Caco-2 (cell line): ENCODE measurements at regions of chr9 and their contacts with region 1.

Region 1: DNA sequence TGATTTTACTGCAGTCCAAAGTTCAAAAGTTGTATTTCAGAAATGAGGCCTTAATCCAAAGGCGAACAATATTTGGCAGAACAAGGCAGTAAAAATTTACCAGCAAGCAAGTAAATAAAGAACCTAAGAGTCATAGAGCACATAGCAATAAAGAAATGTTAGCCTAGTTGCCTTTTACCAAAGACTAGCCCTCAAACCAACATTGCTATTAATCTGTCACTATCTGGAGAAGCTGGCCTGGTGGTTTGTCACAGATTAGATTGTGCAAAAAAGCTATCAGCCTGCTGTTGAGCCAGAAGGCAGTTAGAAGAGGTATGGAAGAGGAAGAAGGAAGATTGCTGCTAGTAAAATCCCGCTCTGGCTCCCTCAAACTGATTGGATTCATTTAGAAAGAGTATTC is 304.7 kb upstream of the KLF4 start:
- DNase-seq: peak; percentile 49 to 60
- H3K4me3 ChIP-seq: no peak overlapping the region
- H3K4me3 Mint-ChIP-seq: no peak overlapping the region
- H3K27ac Mint-ChIP-seq: no peak overlapping the region
- H3K4me1 ChIP-seq: peaks cover 40% of the 10 kb centered on the region
- H3K4me1 Mint-ChIP-seq: peaks cover 21% of the 10 kb centered on the region
- H3K27me3 ChIP-seq: no peaks in the 10 kb centered on the region
- H3K27me3 Mint-ChIP-seq: no peaks in the 10 kb centered on the region
- CTCF ChIP-seq: no peak

Region 2: DNA sequence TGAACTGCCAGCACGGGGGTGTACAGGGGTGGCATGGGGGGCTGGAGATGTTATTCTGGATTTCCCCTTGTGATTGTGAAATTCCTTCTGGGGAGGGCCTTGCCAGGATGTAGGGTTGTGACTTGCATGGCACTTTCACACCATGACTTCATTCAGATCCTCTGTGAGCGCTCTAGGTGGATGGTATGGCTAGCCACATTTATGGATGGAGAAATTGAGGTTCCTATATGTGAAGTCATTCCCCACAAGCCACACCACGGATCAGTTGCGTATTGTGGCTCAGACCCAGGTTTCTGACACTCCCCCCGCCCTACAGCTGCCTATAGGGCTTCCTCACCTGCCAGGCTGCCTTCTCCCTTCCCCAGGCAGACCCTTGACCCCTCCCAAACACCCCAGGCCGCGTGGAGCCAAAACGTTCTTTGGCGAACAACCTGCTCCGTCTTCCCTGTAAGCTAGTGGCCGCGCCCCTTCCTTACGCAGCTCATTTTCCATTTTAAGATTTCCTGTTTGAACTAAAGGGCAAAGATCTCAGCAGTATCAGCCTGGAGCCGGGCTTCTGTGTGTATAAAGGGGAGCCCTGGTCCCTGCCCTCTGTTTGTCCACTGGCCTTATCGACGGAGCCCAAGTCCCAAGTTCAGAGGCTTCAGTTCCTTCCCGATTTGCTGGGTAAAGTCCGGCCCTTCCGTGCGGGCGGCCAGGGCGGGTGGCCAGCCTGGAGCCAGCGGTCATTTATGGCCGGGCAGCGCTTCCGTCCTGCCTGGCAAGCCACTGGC is 206.9 kb before region 1 on chr9:
- CTCF ChIA-PET with region 1: no interaction called
- POLR2A ChIA-PET with region 1: no interaction called
- intact Hi-C with region 1: loop called (anchors 5 kb)
- DNase-seq: peak; percentile 62 to 80
- H3K4me3 ChIP-seq: peak overlapping the region; percentile 28
- H3K4me3 Mint-ChIP-seq: peak overlapping the region; percentile 72
- H3K27ac Mint-ChIP-seq: peak overlapping the region; percentile 55
- H3K4me1 ChIP-seq: peaks cover 21% of the 10 kb centered on the region
- H3K4me1 Mint-ChIP-seq: peaks cover 44% of the 10 kb centered on the region
- H3K27me3 ChIP-seq: no peaks in the 10 kb centered on the region
- H3K27me3 Mint-ChIP-seq: no peaks in the 10 kb centered on the region
- CTCF ChIP-seq: no peak

Region 3: GRCh38 chr9:107612136-107612535 is 182.1 kb before region 1 on chr9:
- CTCF ChIA-PET with region 1: no interaction called
- POLR2A ChIA-PET with region 1: no interaction called
- intact Hi-C with region 1: loop called (anchors 5 kb)
- DNase-seq: no peak
- H3K4me3 ChIP-seq: no peak overlapping the region
- H3K4me3 Mint-ChIP-seq: no peak overlapping the region
- H3K27ac Mint-ChIP-seq: no peak overlapping the region
- H3K4me1 ChIP-seq: peaks cover 23% of the 10 kb centered on the region
- H3K4me1 Mint-ChIP-seq: peaks cover 13% of the 10 kb centered on the region
- H3K27me3 ChIP-seq: no peaks in the 10 kb centered on the region
- H3K27me3 Mint-ChIP-seq: peaks cover 3% of the 10 kb centered on the region
- CTCF ChIP-seq: no peak

Region 4: GRCh38 chr9:107751567-107752210 is 42.6 kb before region 1 on chr9:
- CTCF ChIA-PET with region 1: no interaction called
- POLR2A ChIA-PET with region 1: no interaction called
- intact Hi-C with region 1: loop called (anchors 2 kb)
- DNase-seq: peak; percentile 45 to 73
- H3K4me3 ChIP-seq: no peak overlapping the region
- H3K4me3 Mint-ChIP-seq: no peak overlapping the region
- H3K27ac Mint-ChIP-seq: peak overlapping the region; percentile 64
- H3K4me1 ChIP-seq: peaks cover 34% of the 10 kb centered on the region
- H3K4me1 Mint-ChIP-seq: peaks cover 21% of the 10 kb centered on the region
- H3K27me3 ChIP-seq: no peaks in the 10 kb centered on the region
- H3K27me3 Mint-ChIP-seq: no peaks in the 10 kb centered on the region
- CTCF ChIP-seq: no peak

Region 5: GRCh38 chr9:108156270-108156998 is 362.2 kb after region 1 on chr9:
- CTCF ChIA-PET with region 1: no interaction called
- POLR2A ChIA-PET with region 1: no interaction called
- intact Hi-C with region 1: loop called (anchors 2 kb)
- DNase-seq: peak; percentile 79 to 85
- H3K4me3 ChIP-seq: peak overlapping the region; percentile 21; the same call in 1 of the 2 replicates
- H3K4me3 Mint-ChIP-seq: peak overlapping the region; percentile 11
- H3K27ac Mint-ChIP-seq: peak overlapping the region; percentile 26
- H3K4me1 ChIP-seq: peaks cover 28% of the 10 kb centered on the region
- H3K4me1 Mint-ChIP-seq: peaks cover 19% of the 10 kb centered on the region
- H3K27me3 ChIP-seq: no peaks in the 10 kb centered on the region
- H3K27me3 Mint-ChIP-seq: no peaks in the 10 kb centered on the region
- CTCF ChIP-seq: no peak